ENCODE measurements at regions of chr11 and their contacts with region 1.

Region 1: GRCh38 chr11:66268283-66268951 is at the start of gene RAB1B:
- DNase-seq: peak; percentile 98
- ATAC-seq: peak; percentile 76
- H3K4me3 Mint-ChIP-seq: peak within 1 kb of the TSS; percentile 90
- H3K27ac Mint-ChIP-seq: peak within 1 kb of the TSS; percentile 97
- H3K4me1 Mint-ChIP-seq: peaks cover 32% of the 10 kb centered on the region
- H3K27me3 Mint-ChIP-seq: no peaks in the 10 kb centered on the region
- CTCF ChIP-seq: no peak
- total RNA-seq, gene RAB1B: 115 and 118 TPM in 2 replicates

Region 2: GRCh38 chr11:66282468-66283386 is 14.3 kb after region 1 on chr11:
- CTCF ChIA-PET with region 1: interaction called, 14 read pairs
- POLR2A ChIA-PET with region 1: interaction called, 50 read pairs
- intact Hi-C with region 1: loop called (anchors 1 kb)
- DNase-seq: peak; percentile 100
- ATAC-seq: peak; percentile 79
- H3K4me3 Mint-ChIP-seq: peak overlapping the region; percentile 32
- H3K27ac Mint-ChIP-seq: peak overlapping the region; percentile 77
- H3K4me1 Mint-ChIP-seq: peaks cover 36% of the 10 kb centered on the region
- H3K27me3 Mint-ChIP-seq: no peaks in the 10 kb centered on the region
- CTCF ChIP-seq: peak; percentile 70

Region 3: GRCh38 chr11:66288671-66289547 is 20.5 kb after region 1 on chr11 and contains the start of gene YIF1A:
- CTCF ChIA-PET with region 1: no interaction called
- POLR2A ChIA-PET with region 1: interaction called, 42 read pairs
- intact Hi-C with region 1: loop called (anchors 1 kb)
- DNase-seq: peak; percentile 93
- ATAC-seq: peak; percentile 95
- H3K4me3 Mint-ChIP-seq: peak within 1 kb of the TSS; percentile 89
- H3K27ac Mint-ChIP-seq: peak within 1 kb of the TSS; percentile 90
- H3K4me1 Mint-ChIP-seq: peaks cover 31% of the 10 kb centered on the region
- H3K27me3 Mint-ChIP-seq: peaks cover 17% of the 10 kb centered on the region
- CTCF ChIP-seq: no peak
- total RNA-seq, gene YIF1A: 53.4 and 62.6 TPM in 2 replicates

Region 4: GRCh38 chr11:66579017-66579606 is 310.7 kb after region 1 on chr11:
- CTCF ChIA-PET with region 1: no interaction called
- POLR2A ChIA-PET with region 1: no interaction called
- intact Hi-C with region 1: no loop called
- DNase-seq: peak; percentile 76
- ATAC-seq: peak; percentile 88
- H3K4me3 Mint-ChIP-seq: no peak overlapping the region
- H3K27ac Mint-ChIP-seq: no peak overlapping the region
- H3K4me1 Mint-ChIP-seq: peaks cover 7% of the 10 kb centered on the region
- H3K27me3 Mint-ChIP-seq: peaks cover 13% of the 10 kb centered on the region
- CTCF ChIP-seq: peak; percentile 42

Measured in activated B cell treated with CpG ODN at 0.5 μM for 24 hours (primary cell).